ENCODE measurements at regions of chr11 and their contacts with region 1.

Region 1: DNA sequence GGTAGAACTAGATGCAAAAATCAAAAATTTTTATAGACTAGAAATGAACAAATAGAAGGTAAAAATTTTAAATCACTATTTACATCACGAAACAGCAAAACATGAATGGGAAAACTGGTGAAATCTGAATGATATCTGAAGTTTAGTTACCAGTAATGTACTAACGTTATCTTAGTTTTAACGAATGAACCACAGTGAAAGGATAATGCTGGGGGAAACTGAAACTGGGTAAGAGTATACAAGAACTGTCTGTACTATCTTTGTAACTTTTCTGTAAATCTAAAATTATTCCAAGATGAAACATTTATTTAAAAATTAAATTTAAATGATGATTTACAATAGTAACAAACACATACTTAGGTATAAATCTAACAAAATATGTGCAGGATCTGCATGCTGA is 7.4 kb downstream of the GDPD4 start:
- DNase-seq: no peak
- ATAC-seq: no peak
- H3K4me3 ChIP-seq: no peak overlapping the region
- H3K27ac ChIP-seq: no peak overlapping the region
- H3K4me1 ChIP-seq: no peaks in the 10 kb centered on the region
- H3K27me3 ChIP-seq: no peaks in the 10 kb centered on the region
- CTCF ChIP-seq: no peak
- POLR2A ChIP-seq: no peak
- RAD21 ChIP-seq: no peak

Region 2: DNA sequence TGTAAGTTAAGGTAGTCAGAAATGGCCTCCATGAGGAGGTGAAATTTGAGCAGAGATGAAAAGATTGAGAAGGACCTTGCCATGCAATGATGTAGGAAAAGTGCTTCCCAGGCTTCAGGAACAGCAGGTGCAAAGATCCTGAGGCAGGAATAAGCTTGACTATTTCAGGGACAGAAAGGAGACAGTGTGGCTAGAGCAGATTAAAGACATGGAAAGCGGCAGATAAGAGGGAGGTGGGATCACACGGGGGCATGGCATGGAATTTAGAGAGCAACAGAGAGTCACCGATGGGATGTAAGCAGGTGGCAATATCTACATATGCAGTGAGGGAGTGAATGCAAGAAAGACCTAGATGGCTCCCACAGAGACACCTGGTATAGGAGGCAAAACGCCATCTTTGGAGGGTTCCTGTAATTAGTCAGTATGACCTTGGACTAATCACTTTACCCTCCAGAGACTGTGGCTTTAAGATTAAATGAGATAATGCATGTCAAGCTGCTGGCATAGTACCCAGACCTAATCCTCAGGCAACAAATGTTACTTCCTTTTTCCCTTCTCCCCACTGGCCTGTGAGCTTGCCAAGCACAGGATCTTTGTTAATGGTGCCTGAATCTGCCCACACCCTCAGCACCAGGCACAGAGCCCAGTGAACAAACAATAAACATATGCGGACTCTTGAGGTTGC is 458.0 kb before region 1 on chr11:
- CTCF ChIA-PET with region 1: no interaction called
- POLR2A ChIA-PET with region 1: no interaction called
- dilution Hi-C with region 1: no loop called
- in situ Hi-C with region 1: no loop called
- intact Hi-C with region 1: no loop called
- DNase-seq: peak; percentile 68
- ATAC-seq: peak; percentile 76
- H3K4me3 ChIP-seq: no peak overlapping the region
- H3K27ac ChIP-seq: no peak overlapping the region
- H3K4me1 ChIP-seq: peaks cover 5% of the 10 kb centered on the region; the same call in 1 of the 2 replicates
- H3K27me3 ChIP-seq: peaks cover 54% of the 10 kb centered on the region
- CTCF ChIP-seq: no peak
- POLR2A ChIP-seq: no peak
- RAD21 ChIP-seq: no peak

Region 3: DNA sequence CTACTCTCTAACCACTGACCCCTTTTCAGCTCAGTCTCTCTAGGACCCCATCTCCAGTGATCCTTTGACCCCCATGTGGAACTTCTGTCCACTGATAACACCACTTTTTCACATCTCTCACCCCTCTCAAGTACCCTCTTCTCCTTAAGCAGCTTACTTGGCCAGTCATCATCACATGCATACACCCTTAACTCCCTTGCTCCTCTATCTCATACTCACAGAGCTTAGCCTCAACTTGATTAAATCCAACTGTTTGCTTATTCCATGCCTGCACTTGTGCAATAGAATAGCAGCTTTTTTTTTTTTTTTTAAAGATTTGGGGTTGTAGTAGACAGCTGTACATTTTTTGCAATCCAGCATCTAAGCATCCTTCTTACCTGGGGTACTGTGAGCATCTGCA is 317.9 kb after region 1 on chr11:
- CTCF ChIA-PET with region 1: no interaction called
- POLR2A ChIA-PET with region 1: no interaction called
- dilution Hi-C with region 1: no loop called
- in situ Hi-C with region 1: no loop called
- intact Hi-C with region 1: no loop called
- DNase-seq: no peak
- ATAC-seq: peak; percentile 32
- H3K4me3 ChIP-seq: no peak overlapping the region
- H3K27ac ChIP-seq: no peak overlapping the region
- H3K4me1 ChIP-seq: no peaks in the 10 kb centered on the region
- H3K27me3 ChIP-seq: no peaks in the 10 kb centered on the region
- CTCF ChIP-seq: no peak
- POLR2A ChIP-seq: no peak
- RAD21 ChIP-seq: no peak

Region 4: DNA sequence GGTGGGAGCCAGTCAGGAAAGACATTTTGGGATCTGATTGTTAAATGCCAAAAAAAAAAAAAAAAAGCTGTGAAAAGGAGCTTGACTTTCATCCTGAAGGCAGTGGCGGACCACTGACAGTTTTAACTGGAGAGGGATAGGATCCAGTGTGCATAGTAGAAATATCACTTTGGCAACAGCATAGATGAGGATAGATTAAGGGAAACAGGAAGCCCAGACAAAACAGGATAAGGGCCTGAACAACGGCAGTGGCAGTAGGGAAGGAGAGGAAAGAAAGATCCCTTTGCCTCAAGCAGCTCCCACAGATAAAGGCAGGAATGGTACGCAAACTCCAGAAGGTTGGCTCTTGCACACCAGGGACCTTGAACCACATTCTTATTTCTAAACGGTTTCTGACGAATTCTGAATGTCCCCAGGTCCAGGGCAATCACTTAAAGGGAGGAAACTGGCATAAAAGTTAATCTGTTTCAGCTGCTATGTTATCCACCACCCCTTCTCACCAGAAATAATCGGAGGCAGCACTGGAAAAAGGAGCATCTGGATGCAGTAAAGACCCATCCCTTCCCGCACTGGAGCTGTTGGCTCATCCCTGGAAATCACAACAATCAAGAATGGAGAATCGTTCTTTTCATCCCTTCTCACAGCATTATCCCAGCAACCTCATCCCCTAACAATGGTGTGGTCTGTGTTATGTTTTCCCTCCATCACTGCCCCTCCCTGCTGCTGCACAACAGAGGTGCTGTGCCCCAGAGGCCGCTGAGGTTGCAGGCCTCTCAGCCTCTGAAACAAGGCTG is 1024.5 kb after region 1 on chr11:
- CTCF ChIA-PET with region 1: no interaction called
- POLR2A ChIA-PET with region 1: no interaction called
- dilution Hi-C with region 1: no loop called
- in situ Hi-C with region 1: no loop called
- intact Hi-C with region 1: loop called (anchors 5 kb)
- DNase-seq: no peak
- ATAC-seq: no peak
- H3K4me3 ChIP-seq: no peak overlapping the region
- H3K27ac ChIP-seq: no peak overlapping the region
- H3K4me1 ChIP-seq: peaks cover 13% of the 10 kb centered on the region; the same call in 1 of the 2 replicates
- H3K27me3 ChIP-seq: no peaks in the 10 kb centered on the region
- CTCF ChIP-seq: no peak
- POLR2A ChIP-seq: no peak
- RAD21 ChIP-seq: no peak

Measured in IMR-90 (cell line).